PC-9 (cell line): ENCODE measurements at regions of chr4 and their contacts with region 1.

Region 1: DNA sequence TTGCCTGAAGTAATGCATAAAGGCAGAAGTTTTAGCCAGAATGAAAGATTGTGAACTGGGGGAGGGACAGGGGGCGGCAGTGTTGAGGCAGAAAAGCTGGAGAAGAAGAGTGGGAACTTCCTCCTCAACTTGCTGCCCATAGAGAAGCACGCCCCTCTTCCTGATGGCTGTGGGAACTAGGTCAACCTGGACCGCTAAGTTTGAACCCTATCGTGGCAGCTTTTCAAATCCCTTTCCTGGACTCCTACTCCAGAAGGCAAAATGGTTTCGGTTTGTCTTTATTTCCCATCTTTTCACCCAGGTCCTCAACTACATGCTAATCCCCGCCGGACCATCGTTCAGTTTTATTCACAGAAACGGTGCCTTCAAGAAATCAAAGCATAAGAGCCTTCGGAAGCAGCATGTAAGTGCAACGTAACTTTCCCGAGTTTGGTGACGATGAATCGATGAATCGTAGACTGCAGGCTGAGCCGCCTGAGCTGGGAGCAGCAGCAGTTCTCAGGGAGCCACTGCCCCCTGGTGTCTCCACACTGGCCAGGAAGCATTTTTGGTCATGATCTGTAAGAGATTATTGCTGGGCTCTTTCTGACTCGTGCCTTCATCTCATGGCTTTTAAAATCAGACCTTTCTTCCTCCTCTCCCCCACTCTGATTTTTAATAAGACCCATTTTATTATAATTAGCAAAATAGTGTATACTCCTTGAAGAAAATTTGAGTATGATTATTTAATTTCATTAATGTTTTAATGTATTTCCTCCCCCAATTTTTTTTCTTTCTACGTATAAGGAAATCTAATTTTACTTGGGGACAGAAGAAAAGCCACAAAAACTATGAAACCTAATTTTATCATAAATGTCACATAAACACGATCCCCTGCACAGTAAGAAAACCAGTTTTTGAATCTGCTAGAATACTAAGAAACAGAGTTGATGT is 21.4 kb downstream of the SPINK2 start:
- DNase-seq: peak; percentile 70 to 72
- H3K4me3 ChIP-seq: peak overlapping the region; percentile 81
- H3K27ac ChIP-seq: peak overlapping the region; percentile 37; the same call in 1 of the 2 replicates
- H3K4me1 ChIP-seq: no peaks in the 10 kb centered on the region
- H3K27me3 ChIP-seq: no peaks in the 10 kb centered on the region
- CTCF ChIP-seq: peak; percentile 87

Region 2: DNA sequence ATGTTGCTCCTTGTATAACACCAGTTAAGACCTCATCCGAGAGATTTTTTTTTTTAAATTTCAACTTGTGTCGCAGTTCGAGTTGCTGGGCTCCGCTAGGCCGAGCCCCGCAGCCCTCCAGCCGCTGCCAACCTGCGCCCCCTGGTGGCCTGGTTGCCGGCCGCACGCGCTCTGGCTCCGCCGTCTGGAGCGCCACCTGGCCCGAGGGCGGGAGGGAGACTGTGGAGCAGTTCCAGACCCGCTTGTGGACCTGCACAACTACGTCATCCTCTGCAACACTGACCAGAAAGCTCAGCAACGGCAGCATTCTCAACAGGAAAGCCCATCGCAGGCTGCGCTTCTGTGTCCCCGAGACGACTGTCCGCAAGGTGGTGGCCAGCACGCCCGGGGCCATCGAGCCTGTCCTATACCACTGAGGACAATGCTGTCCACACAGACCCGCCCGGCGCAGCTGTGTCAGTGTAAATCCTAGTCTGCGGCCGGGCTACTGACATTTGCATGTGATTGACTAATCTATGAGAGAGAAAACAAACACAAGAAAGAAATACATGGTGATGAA is 255.4 kb before region 1 on chr4:
- CTCF ChIA-PET with region 1: no interaction called
- POLR2A ChIA-PET with region 1: no interaction called
- intact Hi-C with region 1: loop called (anchors 1 kb)
- DNase-seq: peak; percentile 51 to 86
- H3K4me3 ChIP-seq: peak overlapping the region; percentile 57
- H3K27ac ChIP-seq: no peak overlapping the region
- H3K4me1 ChIP-seq: no peaks in the 10 kb centered on the region
- H3K27me3 ChIP-seq: no peaks in the 10 kb centered on the region
- CTCF ChIP-seq: peak; percentile 90

Region 3: DNA sequence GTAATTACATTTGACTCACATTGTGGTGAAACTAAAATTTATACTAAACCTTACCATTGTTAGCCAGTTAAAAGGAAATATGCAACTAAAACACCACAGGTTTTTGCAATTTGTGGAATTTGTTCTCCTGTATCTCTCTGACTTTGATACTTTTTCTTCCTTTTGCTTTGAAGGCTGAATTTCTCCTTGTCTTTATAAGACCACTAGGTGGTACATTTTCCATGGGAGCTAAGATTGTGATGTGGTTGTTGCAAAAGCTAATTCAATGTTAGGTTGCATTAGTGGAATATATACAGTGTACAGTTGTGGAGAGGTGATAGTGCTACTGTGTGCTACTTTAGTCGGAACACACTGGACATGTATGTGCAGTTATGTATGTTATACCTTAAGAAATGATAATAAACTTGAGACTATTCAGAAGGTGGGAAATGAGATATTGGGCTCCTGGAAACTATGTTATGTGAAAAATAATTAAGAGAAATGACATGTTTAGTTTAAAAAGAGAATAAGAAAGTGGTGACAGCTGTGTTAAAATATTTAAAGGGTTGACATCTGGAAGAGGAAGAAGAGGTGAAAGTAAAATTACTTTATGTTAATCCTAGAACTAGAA is 224.2 kb before region 1 on chr4:
- CTCF ChIA-PET with region 1: interaction called, 4 read pairs
- POLR2A ChIA-PET with region 1: no interaction called
- intact Hi-C with region 1: loop called (anchors 1 kb)
- DNase-seq: no peak
- H3K4me3 ChIP-seq: no peak overlapping the region
- H3K27ac ChIP-seq: no peak overlapping the region
- H3K4me1 ChIP-seq: no peaks in the 10 kb centered on the region
- H3K27me3 ChIP-seq: no peaks in the 10 kb centered on the region
- CTCF ChIP-seq: peak; percentile 57

Region 4: GRCh38 chr4:56626963-56627362 is 173.1 kb before region 1 on chr4:
- CTCF ChIA-PET with region 1: no interaction called
- POLR2A ChIA-PET with region 1: no interaction called
- intact Hi-C with region 1: loop called (anchors 1 kb)
- DNase-seq: peak in 1 of 2 experiments; percentile 3
- H3K4me3 ChIP-seq: no peak overlapping the region
- H3K27ac ChIP-seq: no peak overlapping the region
- H3K4me1 ChIP-seq: 0 out of 2 replicates have a peak, but pooled peaks cover 3% of the 10 kb centered on the region
- H3K27me3 ChIP-seq: no peaks in the 10 kb centered on the region
- CTCF ChIP-seq: no peak

Region 5: DNA sequence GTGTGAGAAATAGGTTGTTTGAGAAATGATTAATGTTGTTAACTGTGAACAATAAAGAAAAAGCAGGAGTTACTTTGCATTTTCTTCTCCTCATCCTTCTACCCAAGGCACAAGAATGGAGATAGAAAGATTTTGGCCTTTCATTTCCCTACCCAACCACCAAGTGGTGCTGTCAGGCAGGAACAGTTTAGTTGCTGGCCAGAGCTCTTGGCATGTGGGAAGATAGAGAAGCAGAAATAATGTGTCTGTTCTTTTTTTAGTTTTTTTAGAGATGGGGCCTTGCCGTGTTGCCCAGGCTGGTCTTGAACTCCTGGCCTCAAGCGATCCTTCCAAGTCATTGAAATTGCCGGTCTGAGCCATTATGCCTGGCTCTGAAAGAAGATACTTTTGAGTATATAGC is 131.8 kb before region 1 on chr4:
- CTCF ChIA-PET with region 1: no interaction called
- POLR2A ChIA-PET with region 1: no interaction called
- intact Hi-C with region 1: loop called (anchors 1 kb)
- DNase-seq: peak in 1 of 2 experiments; percentile 5
- H3K4me3 ChIP-seq: no peak overlapping the region
- H3K27ac ChIP-seq: no peak overlapping the region
- H3K4me1 ChIP-seq: no peaks in the 10 kb centered on the region
- H3K27me3 ChIP-seq: no peaks in the 10 kb centered on the region
- CTCF ChIP-seq: peak; percentile 62

Region 6: DNA sequence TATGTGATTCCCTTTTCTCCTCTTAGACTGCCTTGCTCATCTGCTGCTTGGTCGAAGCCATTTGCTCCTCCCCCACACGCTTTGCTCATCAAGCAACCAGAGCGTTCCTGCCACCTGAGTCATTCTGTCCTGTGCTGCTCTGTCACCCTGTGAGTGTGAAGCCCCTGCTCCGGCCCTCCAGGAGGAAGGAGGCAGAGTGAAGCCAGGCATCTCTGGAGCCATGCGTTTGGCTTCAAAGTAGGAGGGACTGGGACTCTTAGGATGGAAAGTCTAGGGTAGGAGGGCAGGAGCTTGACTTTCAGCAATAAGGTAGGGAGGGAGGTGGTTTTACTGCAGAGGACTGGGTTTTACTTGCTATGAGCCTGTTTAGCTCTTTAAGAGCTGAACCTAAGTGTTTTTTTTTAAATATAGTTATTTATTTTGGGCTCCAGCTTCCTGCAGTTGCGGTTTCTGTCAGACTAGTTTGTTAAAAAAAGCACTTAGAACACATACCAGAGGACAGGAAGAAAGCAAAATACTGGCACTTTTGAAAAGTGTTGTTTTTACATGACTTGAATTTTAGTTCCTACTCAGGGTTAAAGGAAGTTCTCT is 42.2 kb before region 1 on chr4:
- CTCF ChIA-PET with region 1: no interaction called
- POLR2A ChIA-PET with region 1: no interaction called
- intact Hi-C with region 1: loop called (anchors 5 kb)
- DNase-seq: peak; percentile 83 to 89
- H3K4me3 ChIP-seq: peak overlapping the region; percentile 47; the same call in 1 of the 2 replicates
- H3K27ac ChIP-seq: peak overlapping the region; percentile 93
- H3K4me1 ChIP-seq: peaks cover 43% of the 10 kb centered on the region
- H3K27me3 ChIP-seq: no peaks in the 10 kb centered on the region
- CTCF ChIP-seq: no peak

Region 7: DNA sequence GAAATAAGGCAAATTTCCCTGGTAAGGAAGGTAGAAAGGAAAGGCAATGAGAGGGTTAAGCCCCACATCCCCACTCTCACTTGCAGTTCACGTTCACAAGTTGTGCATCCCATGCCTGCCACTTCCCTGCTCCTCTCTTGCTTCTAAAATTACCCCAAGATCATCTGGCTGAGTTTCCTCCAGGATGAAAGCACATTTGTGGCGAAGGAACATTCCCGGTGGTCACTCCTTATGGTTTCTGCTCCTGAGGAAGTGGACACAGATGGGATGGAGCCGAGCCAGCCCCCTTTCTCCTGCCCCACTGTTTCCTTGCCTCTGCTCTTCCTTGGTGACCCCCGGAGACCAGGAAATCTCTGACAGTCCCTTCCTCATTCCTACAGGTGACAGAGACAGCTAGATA is 16.1 kb before region 1 on chr4:
- CTCF ChIA-PET with region 1: no interaction called
- POLR2A ChIA-PET with region 1: no interaction called
- intact Hi-C with region 1: no loop called
- DNase-seq: no peak
- H3K4me3 ChIP-seq: no peak overlapping the region
- H3K27ac ChIP-seq: no peak overlapping the region
- H3K4me1 ChIP-seq: no peaks in the 10 kb centered on the region
- H3K27me3 ChIP-seq: no peaks in the 10 kb centered on the region
- CTCF ChIP-seq: no peak

Region 8: GRCh38 chr4:56821381-56822243 is 21.5 kb after region 1 on chr4 and contains the start of gene SPINK2:
- CTCF ChIA-PET with region 1: no interaction called
- POLR2A ChIA-PET with region 1: no interaction called
- intact Hi-C with region 1: no loop called
- DNase-seq: peak in 1 of 2 experiments; percentile 45
- H3K4me3 ChIP-seq: peak within 1 kb of the TSS; percentile 33; the same call in 1 of the 2 replicates
- H3K27ac ChIP-seq: no peak within 1 kb of the TSS
- H3K4me1 ChIP-seq: no peaks in the 10 kb centered on the region
- H3K27me3 ChIP-seq: no peaks in the 10 kb centered on the region
- CTCF ChIP-seq: no peak
- total RNA-seq, gene SPINK2: not detected in 2 replicates